Right ventricle myocardium inferior (tissue), 1 donor: ENCODE measurements at regions of chrX and their contacts with region 1.

Region 1: GRCh38 chrX:30504309-30504708 is 73.3 kb downstream of the TASL start:
- DNase-seq: no peak
- ATAC-seq: no peak

Region 2: DNA sequence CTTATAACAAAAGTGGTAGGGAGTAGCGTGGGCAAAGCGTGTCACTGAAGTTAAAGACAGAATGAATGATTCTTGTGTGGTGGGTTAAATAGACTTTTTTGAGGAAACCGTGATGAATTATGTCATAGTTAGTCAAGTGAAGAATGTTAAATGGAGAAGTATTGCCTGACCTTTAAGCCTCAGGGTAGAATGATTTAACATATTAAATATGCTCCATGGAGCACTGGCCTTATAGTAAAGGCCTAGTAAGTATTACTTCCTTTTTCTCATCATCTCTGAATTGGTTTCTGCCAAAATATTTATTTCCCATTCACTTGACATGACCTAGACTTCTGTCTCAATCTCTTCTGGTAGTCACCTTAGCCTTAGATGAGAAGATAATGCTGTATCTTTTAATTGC is 233.7 kb before region 1 on chrX:
- intact Hi-C with region 1: loop called (anchors 5 kb)
- DNase-seq: no peak
- ATAC-seq: no peak

Region 3: GRCh38 chrX:30414144-30414543 is 90.2 kb before region 1 on chrX:
- intact Hi-C with region 1: no loop called
- DNase-seq: no peak
- ATAC-seq: no peak